Activated naive CD4-positive, alpha-beta T cell treated with anti-CD3 and anti-CD28 coated beads for 36 hours (primary cell): ENCODE measurements at regions of chr5 and their contacts with region 1.

Region 1: GRCh38 chr5:175534070-175534932 is 55.9 kb downstream of the SFXN1 start:
- DNase-seq: peak; percentile 92
- H3K4me3 Mint-ChIP-seq: peak overlapping the region; percentile 68
- H3K27ac Mint-ChIP-seq: peak overlapping the region; percentile 77
- H3K4me1 Mint-ChIP-seq: peaks cover 54% of the 10 kb centered on the region
- H3K27me3 Mint-ChIP-seq: no peaks in the 10 kb centered on the region

Region 2: GRCh38 chr5:175344331-175345195 is 189.7 kb before region 1 on chr5:
- CTCF ChIA-PET with region 1: no interaction called
- intact Hi-C with region 1: no loop called
- DNase-seq: no peak
- H3K4me3 Mint-ChIP-seq: no peak overlapping the region
- H3K27ac Mint-ChIP-seq: no peak overlapping the region
- H3K4me1 Mint-ChIP-seq: no peaks in the 10 kb centered on the region
- H3K27me3 Mint-ChIP-seq: peaks cover 19% of the 10 kb centered on the region

Region 3: GRCh38 chr5:175517818-175518450 is 16.4 kb before region 1 on chr5:
- CTCF ChIA-PET with region 1: interaction called, 5 read pairs
- intact Hi-C with region 1: loop called (anchors 1 kb)
- DNase-seq: peak; percentile 95
- H3K4me3 Mint-ChIP-seq: peak overlapping the region; percentile 59
- H3K27ac Mint-ChIP-seq: peak overlapping the region; percentile 99
- H3K4me1 Mint-ChIP-seq: peaks cover 87% of the 10 kb centered on the region
- H3K27me3 Mint-ChIP-seq: no peaks in the 10 kb centered on the region

Region 4: GRCh38 chr5:175567954-175568353 is 33.7 kb after region 1 on chr5:
- CTCF ChIA-PET with region 1: interaction called, 8 read pairs
- intact Hi-C with region 1: loop called (anchors 1 kb)
- DNase-seq: no peak
- H3K4me3 Mint-ChIP-seq: no peak overlapping the region
- H3K27ac Mint-ChIP-seq: no peak overlapping the region
- H3K4me1 Mint-ChIP-seq: no peaks in the 10 kb centered on the region
- H3K27me3 Mint-ChIP-seq: no peaks in the 10 kb centered on the region

Region 5: GRCh38 chr5:175657593-175658271 is 123.4 kb after region 1 on chr5 and contains the start of gene HRH2:
- CTCF ChIA-PET with region 1: interaction called, 19 read pairs
- intact Hi-C with region 1: loop called (anchors 1 kb)
- DNase-seq: peak; percentile 74
- H3K4me3 Mint-ChIP-seq: peak within 1 kb of the TSS; percentile 90
- H3K27ac Mint-ChIP-seq: peak within 1 kb of the TSS; percentile 72
- H3K4me1 Mint-ChIP-seq: peaks cover 79% of the 10 kb centered on the region
- H3K27me3 Mint-ChIP-seq: no peaks in the 10 kb centered on the region
- total RNA-seq, gene HRH2: 8.7 to 10.0 TPM

Region 6: GRCh38 chr5:175696139-175696854 is 162.0 kb after region 1 on chr5:
- CTCF ChIA-PET with region 1: interaction called, 111 read pairs
- intact Hi-C with region 1: loop called (anchors 1 kb)
- DNase-seq: peak; percentile 95
- H3K4me3 Mint-ChIP-seq: peak overlapping the region; percentile 74
- H3K27ac Mint-ChIP-seq: peak overlapping the region; percentile 95
- H3K4me1 Mint-ChIP-seq: peaks cover 29% of the 10 kb centered on the region
- H3K27me3 Mint-ChIP-seq: no peaks in the 10 kb centered on the region

Region 7: DNA sequence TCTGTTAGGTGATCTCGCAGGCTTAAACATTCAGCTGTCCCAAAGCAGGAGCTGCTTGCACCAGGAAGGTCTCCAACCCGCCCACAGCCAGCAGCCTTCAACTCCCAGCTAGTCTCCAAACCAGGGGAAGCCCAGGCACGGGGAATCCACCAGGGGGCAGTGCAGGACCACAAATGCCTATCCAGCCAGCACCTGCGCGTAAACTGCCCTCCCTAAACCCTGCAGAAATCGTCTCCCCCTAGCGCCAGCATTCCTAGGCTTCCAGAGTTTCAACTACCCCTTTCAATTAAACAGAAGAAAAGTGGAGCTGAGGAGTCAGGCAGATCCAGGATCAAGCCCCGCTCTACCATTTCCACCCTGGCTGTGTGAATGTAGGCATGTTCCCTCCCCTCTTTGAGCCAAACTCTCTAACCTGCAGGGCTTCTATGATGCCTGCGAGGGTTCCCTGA is 195.6 kb after region 1 on chr5:
- CTCF ChIA-PET with region 1: interaction called, 21 read pairs
- intact Hi-C with region 1: no loop called
- DNase-seq: peak; percentile 98
- H3K4me3 Mint-ChIP-seq: no peak overlapping the region
- H3K27ac Mint-ChIP-seq: no peak overlapping the region
- H3K4me1 Mint-ChIP-seq: peaks cover 7% of the 10 kb centered on the region
- H3K27me3 Mint-ChIP-seq: peaks cover 7% of the 10 kb centered on the region